ENCODE measurements at regions of chr6 and their contacts with region 1.

Region 1: GRCh38 chr6:129730477-129731165 is 20.6 kb upstream of the ARHGAP18 start:
- DNase-seq: peak; percentile 65
- ATAC-seq: peak; percentile 24
- H3K4me3 ChIP-seq: no peak overlapping the region
- H3K4me3 Mint-ChIP-seq: no peak overlapping the region
- H3K27ac ChIP-seq: no peak overlapping the region
- H3K27ac Mint-ChIP-seq: no peak overlapping the region
- H3K4me1 ChIP-seq: peaks cover 0 to 4% of the 10 kb centered on the region in 2 donors
- H3K4me1 Mint-ChIP-seq: no peaks in the 10 kb centered on the region
- H3K27me3 ChIP-seq: no peaks in the 10 kb centered on the region
- H3K27me3 Mint-ChIP-seq: no peaks in the 10 kb centered on the region
- CTCF ChIP-seq: peak; percentile 78

Region 2: GRCh38 chr6:129498950-129499842 is 231.4 kb before region 1 on chr6:
- CTCF ChIA-PET with region 1: interaction called, 60 read pairs
- POLR2A ChIA-PET with region 1: no interaction called
- intact Hi-C with region 1: loop called (anchors 1 kb)
- DNase-seq: peak; percentile 73
- ATAC-seq: peak; percentile 78
- H3K4me3 ChIP-seq: no peak overlapping the region
- H3K4me3 Mint-ChIP-seq: peak overlapping the region; percentile 31
- H3K27ac ChIP-seq: peak overlapping the region in 1 of 2 donors; percentile 9
- H3K27ac Mint-ChIP-seq: no peak overlapping the region
- H3K4me1 ChIP-seq: peaks cover 9 to 10% of the 10 kb centered on the region in 2 donors
- H3K4me1 Mint-ChIP-seq: peaks cover 9% of the 10 kb centered on the region
- H3K27me3 ChIP-seq: no peaks in the 10 kb centered on the region
- H3K27me3 Mint-ChIP-seq: peaks cover 2% of the 10 kb centered on the region
- CTCF ChIP-seq: peak; percentile 79

Region 3: DNA sequence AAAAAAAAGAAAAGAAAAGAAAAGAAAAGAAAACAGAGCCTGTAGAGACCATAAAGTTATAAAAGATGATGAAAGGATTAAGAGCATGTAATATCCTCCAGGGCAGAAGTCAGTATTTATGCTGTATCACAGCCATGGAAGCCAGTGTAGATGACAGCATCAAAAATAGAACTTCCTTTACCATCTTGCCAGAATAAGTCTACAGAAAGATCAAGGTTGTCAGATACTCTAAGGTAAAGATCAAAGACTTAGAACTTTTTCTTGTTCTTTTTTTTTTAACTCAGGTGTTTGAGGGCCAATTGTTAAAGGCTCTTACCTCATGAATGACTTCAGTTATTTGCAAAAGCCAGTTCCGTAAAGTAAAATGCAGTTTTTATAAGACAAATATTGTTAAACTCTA is 75.3 kb before region 1 on chr6:
- CTCF ChIA-PET with region 1: interaction called, 10 read pairs
- POLR2A ChIA-PET with region 1: no interaction called
- intact Hi-C with region 1: no loop called
- DNase-seq: no peak
- ATAC-seq: no peak
- H3K4me3 ChIP-seq: no peak overlapping the region
- H3K4me3 Mint-ChIP-seq: no peak overlapping the region
- H3K27ac ChIP-seq: no peak overlapping the region
- H3K27ac Mint-ChIP-seq: no peak overlapping the region
- H3K4me1 ChIP-seq: no peaks in the 10 kb centered on the region
- H3K4me1 Mint-ChIP-seq: peaks cover 5% of the 10 kb centered on the region
- H3K27me3 ChIP-seq: no peaks in the 10 kb centered on the region
- H3K27me3 Mint-ChIP-seq: no peaks in the 10 kb centered on the region
- CTCF ChIP-seq: no peak

Region 4: DNA sequence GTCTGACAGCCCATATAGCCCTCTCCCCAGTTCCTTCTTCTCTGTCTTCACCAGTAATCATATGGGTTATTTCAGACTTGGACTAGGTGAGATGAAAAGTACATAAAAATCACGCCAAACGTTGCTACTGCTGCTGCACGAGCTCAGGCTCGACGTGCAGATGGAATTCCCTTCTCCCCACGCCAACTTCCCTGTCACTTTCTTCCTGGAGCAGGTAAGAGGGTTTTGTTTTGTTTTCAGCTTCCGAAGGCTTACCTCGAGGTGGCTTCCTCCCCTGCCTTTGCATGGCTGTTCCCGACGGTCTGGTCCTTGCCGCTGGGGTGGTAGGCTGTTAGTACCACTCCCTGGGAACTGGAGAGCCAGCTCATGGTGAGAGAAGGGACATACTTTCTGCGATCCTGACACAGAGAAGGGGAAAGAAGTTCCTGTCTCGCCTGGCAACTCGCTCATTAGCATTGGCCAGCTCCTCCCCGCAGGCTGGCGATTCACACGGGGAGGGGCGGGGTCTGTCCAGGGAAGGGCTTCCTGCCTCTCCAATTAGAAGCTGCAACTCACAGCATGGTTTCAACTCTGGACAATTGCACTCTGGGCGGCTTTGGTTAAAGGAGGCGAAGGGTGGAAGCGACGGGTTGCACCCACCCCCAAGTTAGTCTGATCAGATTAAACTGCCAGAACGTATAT is 20.7 kb before region 1 on chr6 and contains the start of gene ARHGAP18:
- CTCF ChIA-PET with region 1: interaction called, 48 read pairs
- POLR2A ChIA-PET with region 1: no interaction called
- intact Hi-C with region 1: no loop called
- DNase-seq: peak; percentile 70
- ATAC-seq: peak; percentile 93
- H3K4me3 ChIP-seq: peak within 1 kb of the TSS; percentile 63 to 95 (median 73)
- H3K4me3 Mint-ChIP-seq: peak within 1 kb of the TSS; percentile 100
- H3K27ac ChIP-seq: peak within 1 kb of the TSS; percentile 50 to 75
- H3K27ac Mint-ChIP-seq: peak within 1 kb of the TSS; percentile 90
- H3K4me1 ChIP-seq: peaks cover 18 to 19% of the 10 kb centered on the region in 2 donors
- H3K4me1 Mint-ChIP-seq: peaks cover 35% of the 10 kb centered on the region
- H3K27me3 ChIP-seq: no peaks in the 10 kb centered on the region
- H3K27me3 Mint-ChIP-seq: no peaks in the 10 kb centered on the region
- CTCF ChIP-seq: no peak
- total RNA-seq, gene ARHGAP18: 3.9 TPM in 2 replicates

Region 5: DNA sequence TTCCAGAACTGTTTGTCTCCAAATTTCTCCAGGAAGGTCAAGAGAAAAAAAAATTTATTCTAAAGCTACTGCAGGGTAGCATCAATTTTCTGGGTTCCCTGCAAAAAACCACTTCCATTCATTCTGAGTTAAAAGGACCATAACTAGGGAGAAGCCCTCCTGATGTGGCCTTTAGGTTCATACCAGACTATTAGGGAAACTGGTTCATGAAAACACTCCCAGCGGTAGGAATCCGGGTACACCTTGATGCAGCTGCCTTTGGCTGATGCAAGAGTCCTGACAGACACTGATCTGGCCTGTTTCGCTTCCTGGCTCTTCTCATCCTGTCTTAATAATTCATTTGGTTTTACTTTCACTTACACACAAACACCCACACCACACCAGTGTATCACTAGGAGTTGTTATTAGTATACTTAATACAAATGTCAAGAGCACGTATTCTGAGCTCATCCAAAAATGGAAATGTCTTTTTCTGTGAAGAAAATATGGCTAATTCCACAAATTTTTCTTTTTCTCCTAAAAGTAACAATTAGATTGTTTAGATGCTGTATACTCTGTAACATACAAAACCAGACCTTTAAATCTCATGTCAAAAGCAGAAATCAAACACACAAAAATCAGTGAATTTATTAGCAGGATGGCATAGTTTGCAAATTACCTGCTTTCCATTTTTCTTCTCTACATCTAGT is 17.7 kb after region 1 on chr6:
- CTCF ChIA-PET with region 1: interaction called, 34 read pairs
- POLR2A ChIA-PET with region 1: no interaction called
- intact Hi-C with region 1: loop called (anchors 1 kb)
- DNase-seq: peak; percentile 78
- ATAC-seq: peak; percentile 90
- H3K4me3 ChIP-seq: peak overlapping the region in 3 of 5 experiments; percentile 24 to 42 (median 24)
- H3K4me3 Mint-ChIP-seq: peak overlapping the region; percentile 70
- H3K27ac ChIP-seq: peak overlapping the region; percentile 70 to 80
- H3K27ac Mint-ChIP-seq: peak overlapping the region; percentile 81
- H3K4me1 ChIP-seq: peaks cover 43 to 46% of the 10 kb centered on the region in 2 donors
- H3K4me1 Mint-ChIP-seq: peaks cover 58% of the 10 kb centered on the region
- H3K27me3 ChIP-seq: no peaks in the 10 kb centered on the region
- H3K27me3 Mint-ChIP-seq: no peaks in the 10 kb centered on the region
- CTCF ChIP-seq: no peak